GM12878 (cell line): ENCODE measurements at regions of chr1 and their contacts with region 1.

Region 1: GRCh38 chr1:183896466-183897048 is 91.6 kb downstream of the RGL1 start:
- DNase-seq: no peak
- ATAC-seq: peak; percentile 27
- H3K4me3 ChIP-seq: no peak overlapping the region; the same call in 1 of the 2 replicates
- H3K27ac ChIP-seq: peak overlapping the region; percentile 97
- H3K4me1 ChIP-seq: peaks cover 80% of the 10 kb centered on the region
- H3K27me3 ChIP-seq: no peaks in the 10 kb centered on the region
- CTCF ChIP-seq: no peak
- EP300 ChIP-seq: no peak
- POLR2A ChIP-seq: no peak
- RAD21 ChIP-seq: no peak

Region 2: DNA sequence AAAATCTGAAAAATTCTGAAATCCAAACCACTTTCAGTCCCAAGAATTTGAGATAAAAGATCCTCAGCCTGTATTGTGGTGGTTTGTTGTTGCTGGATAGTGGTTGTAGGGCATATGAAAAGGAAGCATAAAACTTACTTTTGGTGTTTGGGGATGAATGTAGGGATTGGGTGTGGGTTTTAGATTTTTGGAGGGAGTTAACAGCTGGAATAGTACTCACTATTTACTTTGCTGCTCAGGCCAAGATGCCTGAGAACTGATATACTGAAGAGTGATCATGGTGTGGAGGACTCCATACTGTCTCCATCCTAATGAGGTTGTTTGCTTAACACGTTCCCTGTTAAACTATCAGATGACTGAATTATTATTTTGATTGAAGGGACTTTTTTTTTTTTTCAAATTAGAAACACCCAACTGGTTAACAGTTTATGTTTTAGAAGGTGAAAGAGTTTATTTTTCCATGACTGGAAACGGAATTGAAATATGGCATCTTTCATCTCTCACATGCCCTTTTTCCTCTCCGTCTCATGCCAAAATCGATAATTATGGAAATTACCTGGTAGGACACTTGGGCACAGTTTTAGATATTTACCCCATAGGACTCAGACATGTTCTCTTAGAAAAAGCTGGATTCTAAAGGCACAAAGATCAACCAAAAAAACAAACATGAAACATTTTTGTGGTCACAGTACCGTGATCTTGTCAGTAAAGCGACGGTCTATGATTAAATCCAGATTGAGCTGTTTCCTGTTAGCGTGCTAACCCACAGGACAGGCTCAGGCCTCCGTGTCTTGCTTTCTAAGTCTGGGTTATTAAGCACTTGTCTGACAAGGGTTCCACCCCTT is 54.4 kb before region 1 on chr1:
- CTCF ChIA-PET with region 1: interaction called, 3 read pairs
- POLR2A ChIA-PET with region 1: interaction called, 3 read pairs
- RAD21 ChIA-PET with region 1: interaction called, 10 read pairs
- SMC1A ChIA-PET with region 1: interaction called, 10 read pairs
- in situ Hi-C with region 1: no loop called
- intact Hi-C with region 1: loop called (anchors 2 kb)
- DNase-seq: peak; percentile 85
- ATAC-seq: peak; percentile 93
- H3K4me3 ChIP-seq: peak overlapping the region; percentile 12
- H3K27ac ChIP-seq: peak overlapping the region; percentile 99
- H3K4me1 ChIP-seq: peaks cover 46% of the 10 kb centered on the region
- H3K27me3 ChIP-seq: no peaks in the 10 kb centered on the region
- CTCF ChIP-seq: no peak
- EP300 ChIP-seq: peak; percentile 74 to 75; a peak in 3 of 4 replicates
- POLR2A ChIP-seq: peak; percentile 53; the same call in 1 of the 2 replicates
- RAD21 ChIP-seq: 0 out of 2 replicates have a peak, but pooled peaks have one; percentile 22

Region 3: DNA sequence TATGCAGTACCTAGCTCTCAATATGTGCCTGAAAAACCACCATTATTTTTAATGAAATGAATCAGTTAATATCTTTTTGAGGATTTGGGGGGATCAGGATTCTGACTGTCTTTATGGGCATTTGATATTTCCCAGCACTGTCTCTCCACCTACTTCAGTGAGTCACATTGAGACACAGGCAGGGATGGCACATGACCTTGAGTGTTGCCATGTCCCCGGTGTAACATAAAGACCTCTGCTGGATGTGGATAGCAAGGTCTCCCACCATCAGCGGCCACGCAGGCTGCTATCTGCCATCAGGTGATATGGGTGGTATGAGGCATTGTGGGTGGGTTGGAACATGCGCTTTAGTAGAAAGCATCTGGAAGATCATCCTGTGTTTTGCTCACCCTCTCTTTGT is 11.5 kb after region 1 on chr1:
- CTCF ChIA-PET with region 1: interaction called, 44 read pairs
- POLR2A ChIA-PET with region 1: interaction called, 13 read pairs
- RAD21 ChIA-PET with region 1: interaction called, 61 read pairs
- SMC1A ChIA-PET with region 1: interaction called, 134 read pairs
- in situ Hi-C with region 1: no loop called
- intact Hi-C with region 1: loop called (anchors 1 kb)
- DNase-seq: no peak
- ATAC-seq: no peak
- H3K4me3 ChIP-seq: no peak overlapping the region
- H3K27ac ChIP-seq: no peak overlapping the region
- H3K4me1 ChIP-seq: peaks cover 38% of the 10 kb centered on the region
- H3K27me3 ChIP-seq: no peaks in the 10 kb centered on the region
- CTCF ChIP-seq: no peak
- EP300 ChIP-seq: no peak
- POLR2A ChIP-seq: peak; percentile 19; the same call in 1 of the 2 replicates
- RAD21 ChIP-seq: no peak

Region 4: GRCh38 chr1:184810735-184811343 is 914.3 kb after region 1 on chr1:
- CTCF ChIA-PET with region 1: no interaction called
- POLR2A ChIA-PET with region 1: no interaction called
- RAD21 ChIA-PET with region 1: no interaction called
- SMC1A ChIA-PET with region 1: no interaction called
- in situ Hi-C with region 1: no loop called
- intact Hi-C with region 1: no loop called
- DNase-seq: no peak
- ATAC-seq: no peak
- H3K4me3 ChIP-seq: no peak overlapping the region
- H3K27ac ChIP-seq: no peak overlapping the region
- H3K4me1 ChIP-seq: peaks cover 8% of the 10 kb centered on the region; the same call in 1 of the 2 replicates
- H3K27me3 ChIP-seq: no peaks in the 10 kb centered on the region
- CTCF ChIP-seq: no peak
- EP300 ChIP-seq: no peak
- POLR2A ChIP-seq: no peak
- RAD21 ChIP-seq: no peak